H1 (cell line): ENCODE measurements at regions of chr2 and their contacts with region 1.

Region 1: GRCh38 chr2:26235085-26235484 is 9.3 kb downstream of the HADHA start:
- DNase-seq: no peak
- H3K4me3 ChIP-seq: no peak overlapping the region
- H3K27ac ChIP-seq: no peak overlapping the region
- H3K4me1 ChIP-seq: no peaks in the 10 kb centered on the region
- H3K27me3 ChIP-seq: no peaks in the 10 kb centered on the region
- CTCF ChIP-seq: peak in 2 of 3 experiments; percentile 22; a peak in 2 of 4 replicates
- EP300 ChIP-seq: no peak
- POLR2A ChIP-seq: no peak
- RAD21 ChIP-seq: peak; percentile 49 to 51

Region 2: DNA sequence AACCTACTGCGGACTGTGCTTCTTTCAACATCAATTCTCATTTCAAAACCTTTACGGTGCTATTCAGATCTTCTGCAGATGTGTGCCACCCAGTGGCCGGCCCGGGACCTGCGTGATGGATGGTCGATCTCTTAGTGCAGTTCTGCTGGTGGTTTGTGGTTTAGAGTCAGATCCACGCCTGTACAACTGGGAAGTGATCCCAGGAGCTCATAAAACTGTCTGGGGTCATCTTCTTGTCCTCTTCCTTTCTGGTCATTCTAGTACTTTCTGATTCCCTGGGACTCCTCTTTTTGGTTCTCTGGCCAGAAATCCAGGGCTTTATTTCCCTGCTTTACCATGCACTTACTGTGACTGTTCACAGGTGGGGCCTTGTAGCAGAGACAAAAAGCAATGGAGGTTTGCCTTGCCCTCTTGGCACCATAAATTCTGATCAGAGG is 95.0 kb after region 1 on chr2:
- CTCF ChIA-PET with region 1: interaction called, 17 read pairs
- POLR2A ChIA-PET with region 1: no interaction called
- DNase-seq: peak in 1 of 2 experiments; percentile 91
- H3K4me3 ChIP-seq: no peak overlapping the region
- H3K27ac ChIP-seq: no peak overlapping the region
- H3K4me1 ChIP-seq: no peaks in the 10 kb centered on the region
- H3K27me3 ChIP-seq: no peaks in the 10 kb centered on the region; a peak in 1 of 7 replicates
- CTCF ChIP-seq: peak; percentile 86 to 87 (median 86)
- EP300 ChIP-seq: no peak
- POLR2A ChIP-seq: no peak
- RAD21 ChIP-seq: peak; percentile 81 to 92